Posterior cingulate gyrus (tissue), 11 donors: ENCODE measurements at regions of chr22 and their contacts with region 1.

Region 1: GRCh38 chr22:17074648-17075002 is 10.2 kb upstream of the IL17RA start:
- DNase-seq: no peak

Region 2: GRCh38 chr22:17501679-17502285 is 427.2 kb after region 1 on chr22:
- intact Hi-C with region 1: loop called (anchors 5 kb)
- DNase-seq: peak in 1 of 10 donors; percentile 22